Activated CD4-positive, alpha-beta T cell treated with anti-CD3 and anti-CD28 coated beads for 36 hours (primary cell): ENCODE measurements at regions of chr22 and their contacts with region 1.

Region 1: DNA sequence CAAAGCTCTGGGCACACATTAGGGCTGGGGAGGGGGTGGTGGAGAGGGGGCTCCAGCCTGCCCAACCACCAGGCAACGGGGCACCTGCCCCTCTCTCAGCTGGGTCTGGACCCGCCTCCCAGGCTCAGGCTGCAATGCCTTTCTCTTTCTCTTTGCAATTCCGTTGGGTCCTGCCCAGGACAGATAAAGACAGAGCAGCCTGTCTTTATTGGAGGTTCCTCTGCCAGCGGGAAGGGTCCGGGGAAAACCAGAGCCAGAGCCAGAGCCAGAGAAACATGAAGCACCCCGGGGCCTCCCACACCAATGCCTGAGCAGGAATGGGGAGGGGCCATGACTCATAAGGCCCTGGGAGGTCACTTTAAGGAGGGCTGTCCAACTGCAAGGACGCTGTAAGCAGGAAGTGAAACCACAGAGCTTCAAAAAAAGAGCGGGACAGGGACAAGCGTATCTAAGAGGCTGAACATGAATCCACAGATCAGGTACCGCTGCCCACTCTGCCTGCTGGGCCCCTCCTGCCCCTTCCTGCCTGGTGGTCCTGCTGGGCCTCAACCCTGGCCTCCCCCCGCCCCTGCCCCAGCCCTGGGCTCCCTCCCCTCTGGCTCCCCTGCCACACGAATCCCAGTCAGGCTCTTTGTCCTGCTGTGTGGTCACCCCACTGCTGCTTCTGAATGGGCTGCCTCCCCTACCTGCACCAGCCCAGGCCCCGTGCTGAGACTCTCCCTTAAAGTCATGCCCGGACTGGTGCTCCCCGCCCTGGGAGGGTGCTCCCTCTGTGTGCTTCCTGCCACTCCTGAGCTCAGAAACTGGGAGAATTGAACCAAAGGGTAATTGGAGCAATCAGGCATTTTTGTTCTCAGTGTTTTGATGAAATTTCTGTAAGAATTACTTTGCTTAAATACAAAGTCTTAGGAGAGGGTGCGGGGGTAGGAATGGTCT is at the start of gene APOBEC3B:
- DNase-seq: peak; percentile 82
- ATAC-seq: peak; percentile 57
- H3K4me3 Mint-ChIP-seq: peak within 1 kb of the TSS; percentile 55
- H3K27ac Mint-ChIP-seq: peak within 1 kb of the TSS; percentile 74
- H3K4me1 Mint-ChIP-seq: peaks cover 53% of the 10 kb centered on the region
- H3K27me3 Mint-ChIP-seq: peaks cover 3% of the 10 kb centered on the region
- total RNA-seq, gene APOBEC3B: 8.0 to 8.5 TPM

Region 2: GRCh38 chr22:38398609-38399461 is 583.4 kb before region 1 on chr22:
- CTCF ChIA-PET with region 1: no interaction called
- POLR2A ChIA-PET with region 1: no interaction called
- intact Hi-C with region 1: no loop called
- DNase-seq: peak; percentile 92
- ATAC-seq: peak; percentile 67
- H3K4me3 Mint-ChIP-seq: peak overlapping the region; percentile 72
- H3K27ac Mint-ChIP-seq: peak overlapping the region; percentile 47
- H3K4me1 Mint-ChIP-seq: peaks cover 38% of the 10 kb centered on the region
- H3K27me3 Mint-ChIP-seq: no peaks in the 10 kb centered on the region

Region 3: GRCh38 chr22:38923463-38924346 is 58.6 kb before region 1 on chr22:
- CTCF ChIA-PET with region 1: no interaction called
- POLR2A ChIA-PET with region 1: no interaction called
- intact Hi-C with region 1: no loop called
- DNase-seq: no peak
- ATAC-seq: no peak
- H3K4me3 Mint-ChIP-seq: no peak overlapping the region
- H3K27ac Mint-ChIP-seq: no peak overlapping the region
- H3K4me1 Mint-ChIP-seq: peaks cover 9% of the 10 kb centered on the region
- H3K27me3 Mint-ChIP-seq: peaks cover 33% of the 10 kb centered on the region

Region 4: DNA sequence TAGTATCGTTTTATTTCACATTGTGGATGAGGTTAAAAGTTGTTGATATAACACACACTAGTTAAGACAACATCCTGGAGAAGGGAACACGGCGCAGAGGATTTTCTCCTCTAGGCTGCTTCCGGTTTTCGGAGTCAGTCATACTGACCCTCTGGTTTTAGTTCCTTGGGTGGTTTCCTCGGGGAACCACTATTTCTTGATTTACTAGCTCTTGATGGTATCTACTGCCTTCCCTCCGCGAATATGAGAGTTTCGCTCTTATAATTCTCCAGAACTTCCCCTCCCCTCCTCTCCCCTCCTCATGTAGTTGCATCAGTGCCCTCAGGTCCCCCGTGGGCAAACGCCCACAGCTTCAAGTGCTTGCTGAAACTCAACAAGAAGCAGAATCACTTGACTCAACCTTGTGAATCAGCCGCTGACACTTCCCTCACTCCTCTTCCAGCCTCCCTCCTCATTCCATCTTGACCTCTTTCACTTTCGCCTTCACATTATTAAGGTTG is 40.7 kb before region 1 on chr22:
- CTCF ChIA-PET with region 1: interaction called, 3 read pairs
- POLR2A ChIA-PET with region 1: interaction called, 7 read pairs
- intact Hi-C with region 1: loop called (anchors 1 kb)
- DNase-seq: peak; percentile 88
- ATAC-seq: peak; percentile 88
- H3K4me3 Mint-ChIP-seq: peak overlapping the region; percentile 59
- H3K27ac Mint-ChIP-seq: peak overlapping the region; percentile 87
- H3K4me1 Mint-ChIP-seq: peaks cover 42% of the 10 kb centered on the region
- H3K27me3 Mint-ChIP-seq: peaks cover 36% of the 10 kb centered on the region

Region 5: GRCh38 chr22:38953577-38954413 is 28.5 kb before region 1 on chr22:
- CTCF ChIA-PET with region 1: interaction called, 4 read pairs
- POLR2A ChIA-PET with region 1: no interaction called
- intact Hi-C with region 1: loop called in 1 of 2 experiments (anchors 1 kb)
- DNase-seq: peak; percentile 90
- ATAC-seq: peak; percentile 95
- H3K4me3 Mint-ChIP-seq: peak overlapping the region; percentile 60
- H3K27ac Mint-ChIP-seq: peak overlapping the region; percentile 93
- H3K4me1 Mint-ChIP-seq: peaks cover 24% of the 10 kb centered on the region
- H3K27me3 Mint-ChIP-seq: peaks cover 8% of the 10 kb centered on the region

Region 6: GRCh38 chr22:39021552-39022250 is 39.4 kb after region 1 on chr22:
- CTCF ChIA-PET with region 1: interaction called, 3 read pairs
- POLR2A ChIA-PET with region 1: no interaction called
- intact Hi-C with region 1: loop called in 1 of 2 experiments (anchors 1 kb)
- DNase-seq: no peak
- ATAC-seq: no peak
- H3K4me3 Mint-ChIP-seq: peak overlapping the region; percentile 95
- H3K27ac Mint-ChIP-seq: peak overlapping the region; percentile 95
- H3K4me1 Mint-ChIP-seq: peaks cover 53% of the 10 kb centered on the region
- H3K27me3 Mint-ChIP-seq: no peaks in the 10 kb centered on the region

Region 7: DNA sequence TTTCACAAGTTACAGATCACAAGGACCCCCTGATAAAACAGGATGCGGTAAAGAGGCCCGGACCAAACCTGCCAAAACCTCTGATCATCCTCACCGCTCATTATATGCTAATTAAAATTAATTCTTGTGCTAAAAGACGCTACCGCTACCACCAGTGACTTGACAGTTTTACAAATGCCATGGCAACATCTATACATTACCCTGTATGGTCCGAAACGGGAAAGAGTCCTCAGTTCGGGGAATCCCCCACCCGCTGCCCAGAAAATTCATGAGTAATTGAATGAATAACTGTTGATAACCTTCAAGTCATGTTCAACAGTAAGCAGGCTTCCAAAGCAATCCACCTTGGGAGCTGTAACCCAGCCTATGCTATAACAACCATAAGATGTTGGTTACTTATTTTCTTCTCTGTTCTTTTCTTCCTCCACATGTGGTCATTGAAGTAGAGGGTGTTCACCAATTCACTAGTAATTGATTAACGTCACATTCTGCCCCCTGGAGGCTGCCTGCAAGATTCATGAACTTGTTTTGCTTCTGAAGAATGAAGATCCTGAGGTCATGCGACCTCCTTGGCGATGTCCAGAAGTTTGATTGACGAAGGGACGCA is 135.4 kb after region 1 on chr22:
- CTCF ChIA-PET with region 1: no interaction called
- POLR2A ChIA-PET with region 1: interaction called, 3 read pairs
- intact Hi-C with region 1: loop called in 1 of 2 experiments (anchors 1 kb)
- DNase-seq: peak; percentile 84
- ATAC-seq: peak; percentile 60
- H3K4me3 Mint-ChIP-seq: peak overlapping the region; percentile 10
- H3K27ac Mint-ChIP-seq: peak overlapping the region; percentile 86
- H3K4me1 Mint-ChIP-seq: peaks cover 54% of the 10 kb centered on the region
- H3K27me3 Mint-ChIP-seq: no peaks in the 10 kb centered on the region